ENCODE measurements at regions of chr15 and their contacts with region 1.

Region 1: GRCh38 chr15:58307313-58307961 is 124.4 kb upstream of the LIPC start:
- DNase-seq: no peak
- ATAC-seq: no peak
- H3K4me3 ChIP-seq: no peak overlapping the region
- H3K27ac ChIP-seq: no peak overlapping the region
- H3K4me1 ChIP-seq: peaks cover 4 to 16% of the 10 kb centered on the region in 2 experiments
- H3K27me3 ChIP-seq: no peaks in the 10 kb centered on the region
- CTCF ChIP-seq: no peak
- EP300 ChIP-seq: no peak
- POLR2A ChIP-seq: no peak
- RAD21 ChIP-seq: no peak

Region 2: DNA sequence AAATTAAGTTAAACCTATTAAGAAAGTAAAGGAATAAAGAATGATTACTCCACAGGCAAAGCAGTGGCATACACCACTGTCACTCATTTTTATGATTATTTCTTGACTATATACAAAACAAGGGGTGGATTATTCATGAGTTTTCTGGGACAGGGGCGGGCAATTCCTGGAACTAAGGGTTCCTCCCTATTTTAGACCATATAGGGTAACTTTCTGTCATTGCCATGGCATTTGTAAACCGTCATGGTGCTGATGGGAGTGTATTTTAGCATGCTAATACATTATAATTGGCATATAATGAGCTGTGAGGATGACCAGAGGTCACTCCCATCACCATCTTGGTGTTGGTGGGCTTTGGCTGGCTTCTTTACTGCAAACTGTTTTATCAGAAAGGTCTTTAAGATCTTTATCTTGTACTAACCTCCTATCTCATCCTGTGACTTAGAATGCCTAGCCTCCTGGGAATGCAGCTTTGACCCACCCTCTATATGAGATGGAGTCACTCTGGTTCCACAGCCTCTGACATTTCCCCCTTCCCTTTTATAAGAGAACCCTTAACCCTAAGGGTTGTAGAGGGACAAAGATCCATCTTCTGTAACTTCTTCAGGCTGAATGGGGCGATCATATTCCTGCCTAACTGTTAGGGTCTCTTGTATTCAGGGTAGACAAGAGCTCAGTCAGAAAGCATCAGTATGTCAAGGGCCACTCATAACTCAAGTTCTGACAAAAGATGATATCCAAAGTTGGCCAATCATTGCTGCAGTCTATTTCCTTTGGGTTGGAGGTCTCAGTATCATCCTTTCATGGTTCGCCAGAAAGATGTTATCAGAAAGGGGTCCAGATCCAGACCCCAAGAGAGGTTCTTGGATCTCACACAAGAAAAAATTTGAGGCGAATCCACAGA is 44.8 kb after region 1 on chr15:
- CTCF ChIA-PET with region 1: no interaction called
- POLR2A ChIA-PET with region 1: no interaction called
- in situ Hi-C with region 1: no loop called
- intact Hi-C with region 1: loop called (anchors 5 kb)
- DNase-seq: peak in 2 of 4 experiments; percentile 49 to 82
- ATAC-seq: peak; percentile 93
- H3K4me3 ChIP-seq: no peak overlapping the region
- H3K27ac ChIP-seq: peak overlapping the region; percentile 35
- H3K4me1 ChIP-seq: peaks cover 0 to 29% of the 10 kb centered on the region in 2 experiments; a peak in 4 of 5 replicates
- H3K27me3 ChIP-seq: no peaks in the 10 kb centered on the region
- CTCF ChIP-seq: no peak
- EP300 ChIP-seq: peak; percentile 67
- POLR2A ChIP-seq: no peak
- RAD21 ChIP-seq: no peak

Measured in K562 (cell line).